AG04449 (cell line): ENCODE measurements at regions of chr1 and their contacts with region 1.

Region 1: GRCh38 chr1:35557292-35558063 is at the starts of genes KIAA0319L and NCDN:
- DNase-seq: peak; percentile 86
- H3K4me3 ChIP-seq: peak within 1 kb of the TSS; percentile 97
- CTCF ChIP-seq: no peak

Region 2: GRCh38 chr1:35298464-35298863 is 259.0 kb before region 1 on chr1:
- CTCF ChIA-PET with region 1: no interaction called
- POLR2A ChIA-PET with region 1: no interaction called
- DNase-seq: no peak
- H3K4me3 ChIP-seq: no peak overlapping the region
- CTCF ChIP-seq: peak; percentile 45

Region 3: GRCh38 chr1:35544978-35545377 is 12.5 kb before region 1 on chr1:
- CTCF ChIA-PET with region 1: interaction called, 15 read pairs
- POLR2A ChIA-PET with region 1: interaction called, 3 read pairs
- DNase-seq: no peak
- H3K4me3 ChIP-seq: no peak overlapping the region
- CTCF ChIP-seq: peak; percentile 16

Region 4: GRCh38 chr1:35656148-35656862 is 98.8 kb after region 1 on chr1:
- CTCF ChIA-PET with region 1: no interaction called
- POLR2A ChIA-PET with region 1: no interaction called
- DNase-seq: no peak
- H3K4me3 ChIP-seq: no peak overlapping the region
- CTCF ChIP-seq: no peak

Region 5: DNA sequence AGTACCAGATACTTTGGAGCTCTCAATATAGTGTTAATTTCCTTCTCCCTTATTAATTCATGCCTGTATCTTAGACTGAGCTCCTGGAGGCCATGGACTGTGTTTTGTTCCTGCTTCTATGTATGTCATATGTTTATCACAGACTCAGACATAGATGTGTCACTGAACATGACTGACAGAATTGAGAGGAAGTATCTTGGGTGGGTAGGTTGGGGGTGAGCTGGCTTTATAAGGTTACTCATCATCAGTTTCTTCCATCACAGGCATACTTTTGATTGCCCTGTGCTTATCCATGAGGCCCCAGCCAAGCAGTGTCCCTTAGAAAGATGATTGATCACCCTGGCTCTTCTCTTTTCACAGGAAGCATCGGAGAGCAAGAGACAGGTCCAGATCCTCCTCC is 743.0 kb after region 1 on chr1:
- CTCF ChIA-PET with region 1: no interaction called
- POLR2A ChIA-PET with region 1: no interaction called
- DNase-seq: no peak
- H3K4me3 ChIP-seq: no peak overlapping the region
- CTCF ChIP-seq: no peak